ENCODE measurements at regions of chr2 and their contacts with region 1.

Region 1: GRCh38 chr2:107936433-107937359 is 49.6 kb upstream of the SLC5A7 start:
- DNase-seq: peak in 1 of 7 donors; percentile 2
- H3K4me3 ChIP-seq: no peak overlapping the region
- H3K27ac ChIP-seq: no peak overlapping the region
- H3K4me1 ChIP-seq: no peaks in the 10 kb centered on the region
- H3K27me3 ChIP-seq: no peaks in the 10 kb centered on the region
- CTCF ChIP-seq: peak; percentile 37 to 61 (median 54)
- POLR2A ChIP-seq: no peak

Region 2: GRCh38 chr2:107986278-107987217 is 49.9 kb after region 1 on chr2 and contains the start of gene SLC5A7:
- intact Hi-C with region 1: no loop called
- DNase-seq: no peak
- H3K4me3 ChIP-seq: no peak within 1 kb of the TSS
- H3K27ac ChIP-seq: no peak within 1 kb of the TSS
- H3K4me1 ChIP-seq: no peaks in the 10 kb centered on the region
- H3K27me3 ChIP-seq: peaks cover 12% of the 10 kb centered on the region
- CTCF ChIP-seq: no peak
- POLR2A ChIP-seq: no peak
- total RNA-seq, gene SLC5A7: 0.06 to 1.9 (median 0.90) TPM in 7 of 9 donors, not detected in the others

Region 3: DNA sequence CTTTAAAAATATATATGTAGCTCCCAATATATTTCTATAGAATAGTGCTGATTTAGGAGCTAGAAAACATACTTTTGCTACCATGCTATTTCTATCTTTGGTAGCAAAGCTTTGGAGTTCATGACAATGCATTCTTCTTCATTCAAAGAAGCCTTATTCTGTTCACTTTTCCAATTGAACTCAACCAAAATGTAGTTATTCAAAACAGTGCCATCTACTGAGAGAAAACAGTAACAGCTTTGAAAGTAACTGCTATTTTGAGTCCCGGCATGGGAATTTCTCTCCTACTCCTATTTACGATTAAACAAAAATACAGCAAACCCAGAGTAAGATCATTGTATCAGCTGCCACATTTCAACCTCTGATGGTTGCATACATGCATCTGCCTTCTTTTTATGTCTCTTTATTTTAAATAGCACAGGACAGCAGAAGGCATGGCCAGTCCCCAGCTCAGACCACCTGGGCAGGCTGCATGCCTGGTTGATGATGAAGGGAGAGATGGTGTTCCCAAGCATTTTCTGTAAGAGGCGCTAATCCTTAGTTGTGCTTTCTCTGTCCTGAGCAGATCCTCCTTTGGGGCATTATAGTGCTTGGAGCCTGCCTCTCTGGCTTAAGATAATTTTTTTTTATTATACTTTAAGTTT is 233.4 kb after region 1 on chr2:
- intact Hi-C with region 1: loop called in 1 of 2 experiments (anchors 10 kb)
- DNase-seq: no peak
- H3K4me3 ChIP-seq: no peak overlapping the region
- H3K27ac ChIP-seq: no peak overlapping the region
- H3K4me1 ChIP-seq: no peaks in the 10 kb centered on the region
- H3K27me3 ChIP-seq: no peaks in the 10 kb centered on the region
- CTCF ChIP-seq: peak; percentile 15 to 52 (median 30)
- POLR2A ChIP-seq: no peak

Measured in adrenal gland (tissue), 19 donors.